Psoas muscle (tissue), 8 donors: ENCODE measurements at regions of chr4 and their contacts with region 1.

Region 1: GRCh38 chr4:4477391-4477790 is 64.5 kb downstream of the STX18 start:
- DNase-seq: no peak
- ATAC-seq: no peak
- H3K4me3 ChIP-seq: no peak overlapping the region
- H3K27ac ChIP-seq: no peak overlapping the region
- H3K4me1 ChIP-seq: peaks cover 12% of the 10 kb centered on the region
- H3K27me3 ChIP-seq: no peaks in the 10 kb centered on the region
- CTCF ChIP-seq: no peak

Region 2: DNA sequence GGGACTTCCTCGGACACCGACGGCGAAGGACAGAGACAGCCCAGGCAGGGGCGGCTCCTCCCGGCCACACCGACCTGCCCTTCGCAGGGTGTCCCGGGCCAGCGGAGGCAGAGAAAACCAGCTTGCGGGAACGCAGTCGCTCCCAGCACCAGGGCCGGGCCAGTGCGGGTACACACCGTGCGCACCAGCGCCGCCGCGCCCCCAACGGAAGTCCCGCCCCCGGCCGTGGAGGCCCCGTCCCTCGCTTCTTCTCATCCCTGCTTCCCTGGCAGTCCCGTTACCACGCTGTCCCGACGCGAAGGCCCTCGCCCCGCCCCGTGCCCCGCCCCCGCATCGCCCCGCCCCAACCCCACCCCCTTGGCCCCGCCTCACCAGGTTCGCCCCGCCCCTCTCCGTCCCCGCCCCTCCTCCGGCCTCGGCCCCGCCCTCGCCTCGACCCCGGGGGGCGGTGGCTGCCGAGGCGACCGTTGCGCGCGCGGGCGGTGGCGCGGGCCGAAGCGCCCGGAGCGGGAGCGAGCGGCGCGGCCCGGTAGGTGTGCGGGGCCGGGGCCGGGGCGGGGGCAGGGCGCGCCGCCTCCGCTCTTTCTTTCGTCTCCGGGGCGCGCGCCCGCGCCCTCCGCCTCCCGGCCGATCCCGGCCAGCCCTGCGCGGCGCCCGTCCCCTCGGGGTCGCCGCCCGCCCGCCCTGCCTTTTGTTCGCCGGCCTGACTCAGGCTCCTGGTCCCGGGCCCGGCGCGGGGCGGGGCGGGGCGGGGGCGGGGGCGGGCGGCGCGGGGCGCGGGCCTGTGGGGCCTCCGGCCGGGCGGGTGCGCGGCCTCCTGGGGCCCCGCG is 1184.6 kb before region 1 on chr4 and contains the start of gene RGS12:
- intact Hi-C with region 1: no loop called
- DNase-seq: peak; percentile 96 to 98
- ATAC-seq: peak; percentile 92 to 94 (median 92)
- H3K4me3 ChIP-seq: peak within 1 kb of the TSS; percentile 88
- H3K27ac ChIP-seq: peak within 1 kb of the TSS; percentile 96
- H3K4me1 ChIP-seq: peaks cover 30% of the 10 kb centered on the region
- H3K27me3 ChIP-seq: no peaks in the 10 kb centered on the region
- CTCF ChIP-seq: no peak
- total RNA-seq, gene RGS12: 13.9 to 29.0 (median 17.8) TPM

Region 3: DNA sequence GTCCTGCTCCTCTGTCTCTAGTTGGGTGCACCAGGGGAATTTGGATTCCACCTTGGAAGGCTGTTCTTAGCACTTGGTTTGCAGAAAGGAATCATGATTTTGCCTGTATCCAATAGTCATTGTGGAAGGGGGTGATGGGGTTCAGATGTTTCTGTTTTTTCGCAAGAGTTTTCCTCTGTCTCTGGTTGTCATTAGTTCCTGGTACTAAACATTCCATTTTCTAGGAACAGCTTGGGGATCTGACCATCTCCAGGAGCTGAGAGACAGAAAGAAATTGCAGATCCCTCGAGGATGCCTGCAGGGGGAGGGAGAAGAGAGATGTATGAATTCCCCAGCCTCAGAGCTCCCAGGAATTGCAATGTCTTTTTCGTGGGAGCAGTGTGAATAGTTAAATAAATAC is 471.0 kb after region 1 on chr4:
- intact Hi-C with region 1: loop called in 1 of 2 experiments (anchors 5 kb)
- DNase-seq: no peak
- ATAC-seq: no peak
- H3K4me3 ChIP-seq: no peak overlapping the region
- H3K27ac ChIP-seq: no peak overlapping the region
- H3K4me1 ChIP-seq: no peaks in the 10 kb centered on the region
- H3K27me3 ChIP-seq: no peaks in the 10 kb centered on the region
- CTCF ChIP-seq: no peak